CD14-positive monocyte (primary cell): ENCODE measurements at regions of chr10 and their contacts with region 1.

Region 1: GRCh38 chr10:63521416-63522276 is 445 bp downstream of the REEP3 start:
- DNase-seq: peak; percentile 46 to 63 (median 62)
- H3K4me3 ChIP-seq: peak overlapping the region; percentile 86 to 99 (median 94)
- H3K4me3 Mint-ChIP-seq: peak overlapping the region; percentile 91
- H3K27ac ChIP-seq: peak overlapping the region; percentile 87 to 92
- H3K27ac Mint-ChIP-seq: peak overlapping the region; percentile 73 to 90 (median 86)
- H3K4me1 ChIP-seq: peaks cover 18 to 26% of the 10 kb centered on the region in 2 donors
- H3K4me1 Mint-ChIP-seq: peaks cover 44% of the 10 kb centered on the region
- H3K27me3 ChIP-seq: no peaks in the 10 kb centered on the region
- H3K27me3 Mint-ChIP-seq: no peaks in the 10 kb centered on the region
- CTCF ChIP-seq: no peak

Region 2: GRCh38 chr10:63421591-63421990 is 100.1 kb before region 1 on chr10:
- intact Hi-C with region 1: no loop called
- DNase-seq: peak; percentile 60 to 72 (median 65)
- H3K4me3 ChIP-seq: no peak overlapping the region
- H3K4me3 Mint-ChIP-seq: peak overlapping the region in 1 of 2 donors; percentile 59
- H3K27ac ChIP-seq: peak overlapping the region in 1 of 2 donors; percentile 60
- H3K27ac Mint-ChIP-seq: peak overlapping the region; percentile 60 to 81 (median 76)
- H3K4me1 ChIP-seq: peaks cover 20 to 27% of the 10 kb centered on the region in 2 donors
- H3K4me1 Mint-ChIP-seq: peaks cover 36% of the 10 kb centered on the region
- H3K27me3 ChIP-seq: no peaks in the 10 kb centered on the region
- H3K27me3 Mint-ChIP-seq: no peaks in the 10 kb centered on the region
- CTCF ChIP-seq: no peak

Region 3: DNA sequence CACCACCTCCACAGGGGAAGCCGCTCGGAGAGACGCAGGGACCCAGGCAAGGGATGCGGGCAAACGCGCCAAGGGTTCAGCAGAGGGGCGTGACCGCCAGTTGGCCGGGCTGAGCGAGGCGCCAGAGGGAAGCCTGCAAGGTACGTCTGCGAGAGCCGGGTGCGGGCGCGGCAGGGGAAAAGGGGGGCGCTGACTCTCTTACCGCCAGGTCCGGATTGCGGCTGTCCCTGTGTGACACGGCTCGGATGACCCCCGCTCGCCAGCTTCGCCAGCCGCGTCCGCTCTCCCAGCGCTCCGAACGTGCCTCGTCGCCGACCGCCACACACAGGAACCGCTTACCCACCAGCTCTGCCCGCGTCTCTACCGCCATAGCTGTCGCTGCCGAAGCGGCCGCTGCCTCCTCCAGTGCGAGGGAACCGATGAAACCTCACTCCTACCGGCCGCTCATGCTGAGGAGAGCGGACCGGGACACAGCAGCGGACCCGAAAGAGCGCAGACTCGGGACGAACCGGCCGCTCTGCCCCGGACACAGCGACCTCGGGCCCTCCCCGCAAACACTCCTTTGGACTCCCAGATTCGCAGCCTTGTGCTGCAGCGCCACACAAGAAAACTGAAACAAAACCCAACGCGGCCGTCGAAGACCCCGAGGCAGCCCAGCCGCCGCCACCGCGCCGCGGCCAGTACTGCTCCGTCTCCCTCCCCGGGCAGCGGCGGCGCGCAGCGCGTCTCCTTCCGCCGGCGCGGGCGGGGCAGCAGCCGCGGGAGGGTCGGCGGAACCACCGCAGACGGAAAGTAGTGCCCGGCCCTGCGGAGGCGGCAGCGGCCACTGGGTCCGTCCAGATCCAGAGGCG is 56.1 kb before region 1 on chr10 and contains the start of gene JMJD1C:
- intact Hi-C with region 1: loop called in 1 of 2 experiments (anchors 5 kb)
- DNase-seq: peak; percentile 53 to 65 (median 57)
- H3K4me3 ChIP-seq: peak within 1 kb of the TSS; percentile 95 to 96 (median 96)
- H3K4me3 Mint-ChIP-seq: peak within 1 kb of the TSS; percentile 99
- H3K27ac ChIP-seq: peak within 1 kb of the TSS; percentile 49 to 63
- H3K27ac Mint-ChIP-seq: peak within 1 kb of the TSS; percentile 82 to 95 (median 90)
- H3K4me1 ChIP-seq: peaks cover 12 to 20% of the 10 kb centered on the region in 2 donors
- H3K4me1 Mint-ChIP-seq: peaks cover 25% of the 10 kb centered on the region
- H3K27me3 ChIP-seq: peaks cover 5 to 13% of the 10 kb centered on the region in 2 donors
- H3K27me3 Mint-ChIP-seq: peaks cover 8 to 28% (median 17%) of the 10 kb centered on the region in 3 donors
- CTCF ChIP-seq: no peak
- polyA plus RNA-seq, gene JMJD1C: 27.8 to 84.8 (median 46.5) TPM

Region 4: DNA sequence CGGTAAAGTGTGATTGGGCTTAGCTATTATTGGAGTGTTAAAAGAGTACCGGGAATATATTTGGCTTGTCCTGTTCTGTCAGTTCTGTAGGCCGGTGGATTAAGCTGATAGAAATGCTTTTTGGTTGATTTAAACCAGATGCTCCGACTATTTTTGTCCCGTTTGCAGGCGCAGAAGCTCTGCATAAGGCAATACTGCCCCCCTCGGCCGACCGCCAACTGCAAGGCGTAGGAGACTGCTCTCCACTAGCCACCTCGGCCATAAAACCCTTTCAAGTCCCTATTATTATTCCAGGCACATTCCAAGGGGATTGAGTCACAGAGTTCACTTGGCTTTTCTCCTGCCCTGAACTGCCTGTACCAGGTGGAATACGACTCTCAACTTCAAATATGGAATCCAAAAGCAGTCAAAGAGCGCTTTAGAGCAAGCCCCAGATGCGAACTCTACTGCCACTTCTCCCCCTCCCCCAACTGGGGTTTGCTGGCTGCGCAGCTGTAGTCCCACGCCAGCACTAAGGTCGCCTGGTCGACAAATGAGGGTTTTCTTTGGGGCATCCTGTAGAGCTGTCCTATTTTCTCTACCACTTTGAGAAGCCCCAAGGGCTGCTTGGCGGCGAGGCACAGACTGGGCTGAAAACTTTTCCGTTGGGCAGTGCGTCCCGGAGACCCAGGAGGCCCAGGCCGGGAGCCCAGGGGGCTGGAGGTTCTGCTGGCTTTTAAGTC is 107.9 kb after region 1 on chr10:
- intact Hi-C with region 1: loop called in 1 of 2 experiments (anchors 10 kb)
- DNase-seq: peak; percentile 55 to 74 (median 70)
- H3K4me3 ChIP-seq: peak overlapping the region; percentile 66 to 85 (median 81)
- H3K4me3 Mint-ChIP-seq: peak overlapping the region; percentile 94 to 95
- H3K27ac ChIP-seq: peak overlapping the region; percentile 84 to 86
- H3K27ac Mint-ChIP-seq: peak overlapping the region; percentile 86 to 96 (median 92)
- H3K4me1 ChIP-seq: peaks cover 42 to 50% of the 10 kb centered on the region in 2 donors
- H3K4me1 Mint-ChIP-seq: peaks cover 47% of the 10 kb centered on the region
- H3K27me3 ChIP-seq: no peaks in the 10 kb centered on the region
- H3K27me3 Mint-ChIP-seq: no peaks in the 10 kb centered on the region
- CTCF ChIP-seq: peak; percentile 87

Region 5: GRCh38 chr10:63707254-63707910 is 185.7 kb after region 1 on chr10:
- intact Hi-C with region 1: loop called in 1 of 2 experiments (anchors 10 kb)
- DNase-seq: peak; percentile 94 to 99 (median 98)
- H3K4me3 ChIP-seq: peak overlapping the region in 1 of 3 experiments; percentile 2
- H3K4me3 Mint-ChIP-seq: no peak overlapping the region
- H3K27ac ChIP-seq: peak overlapping the region in 1 of 2 donors; percentile 75
- H3K27ac Mint-ChIP-seq: peak overlapping the region; percentile 79 to 94 (median 89)
- H3K4me1 ChIP-seq: peaks cover 46 to 58% of the 10 kb centered on the region in 2 donors
- H3K4me1 Mint-ChIP-seq: peaks cover 58% of the 10 kb centered on the region
- H3K27me3 ChIP-seq: no peaks in the 10 kb centered on the region
- H3K27me3 Mint-ChIP-seq: peaks cover 0 to 6% (median 1%) of the 10 kb centered on the region in 3 donors
- CTCF ChIP-seq: no peak